Activated CD4-positive, alpha-beta T cell treated with anti-CD3 and anti-CD28 coated beads, Interleukin-2, amount 10 ng/mL, durations not matched to agents 24 days and 14 days (primary cell): ENCODE measurements at regions of chr6 and their contacts with region 1.

Region 1: DNA sequence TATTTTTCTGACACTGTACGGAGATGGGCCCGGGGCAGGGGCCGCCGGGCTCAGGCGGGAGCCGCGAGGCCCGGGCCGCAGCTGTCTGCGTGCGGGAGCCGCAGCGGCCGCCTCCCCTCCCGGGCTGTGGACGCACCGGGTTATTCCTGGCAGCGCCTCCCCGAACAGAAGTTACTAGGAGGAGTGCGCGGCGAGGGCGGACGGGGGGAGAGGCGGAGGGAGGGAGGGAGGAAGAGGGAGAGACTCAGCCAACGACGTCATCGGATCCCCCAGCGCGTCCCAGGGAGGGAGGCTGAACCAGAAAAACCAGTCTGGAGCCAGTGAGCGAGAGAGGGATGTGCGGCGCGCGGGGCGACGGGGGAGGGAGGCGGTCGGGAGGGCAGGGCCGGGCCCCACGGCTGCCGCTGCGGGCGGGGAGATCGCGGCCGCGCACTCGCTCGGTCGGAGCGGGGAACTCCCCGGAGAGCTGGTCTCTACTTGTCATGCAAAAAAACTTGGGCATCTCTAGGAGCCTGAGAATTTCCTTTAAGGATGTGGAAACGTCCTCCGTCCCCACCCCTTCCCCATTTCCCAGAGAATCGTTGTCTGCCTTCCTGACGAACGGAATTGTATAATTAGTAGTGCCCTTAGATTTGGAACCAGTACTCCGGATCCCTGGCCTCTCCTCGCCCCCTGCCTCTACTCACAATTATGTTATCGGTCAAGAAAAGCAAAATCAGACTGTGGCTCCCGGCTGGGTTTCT is 1.4 kb upstream of the HIVEP2 start:
- DNase-seq: peak; percentile 95
- H3K4me3 Mint-ChIP-seq: peak overlapping the region; percentile 93
- H3K27ac Mint-ChIP-seq: peak overlapping the region; percentile 97
- H3K4me1 Mint-ChIP-seq: peaks cover 42% of the 10 kb centered on the region
- H3K27me3 Mint-ChIP-seq: peaks cover 3% of the 10 kb centered on the region

Region 2: GRCh38 chr6:142802124-142802523 is 144.2 kb before region 1 on chr6:
- intact Hi-C with region 1: loop called (anchors 1 kb)
- DNase-seq: no peak
- H3K4me3 Mint-ChIP-seq: peak overlapping the region; percentile 52
- H3K27ac Mint-ChIP-seq: peak overlapping the region; percentile 82
- H3K4me1 Mint-ChIP-seq: peaks cover 54% of the 10 kb centered on the region
- H3K27me3 Mint-ChIP-seq: no peaks in the 10 kb centered on the region

Region 3: DNA sequence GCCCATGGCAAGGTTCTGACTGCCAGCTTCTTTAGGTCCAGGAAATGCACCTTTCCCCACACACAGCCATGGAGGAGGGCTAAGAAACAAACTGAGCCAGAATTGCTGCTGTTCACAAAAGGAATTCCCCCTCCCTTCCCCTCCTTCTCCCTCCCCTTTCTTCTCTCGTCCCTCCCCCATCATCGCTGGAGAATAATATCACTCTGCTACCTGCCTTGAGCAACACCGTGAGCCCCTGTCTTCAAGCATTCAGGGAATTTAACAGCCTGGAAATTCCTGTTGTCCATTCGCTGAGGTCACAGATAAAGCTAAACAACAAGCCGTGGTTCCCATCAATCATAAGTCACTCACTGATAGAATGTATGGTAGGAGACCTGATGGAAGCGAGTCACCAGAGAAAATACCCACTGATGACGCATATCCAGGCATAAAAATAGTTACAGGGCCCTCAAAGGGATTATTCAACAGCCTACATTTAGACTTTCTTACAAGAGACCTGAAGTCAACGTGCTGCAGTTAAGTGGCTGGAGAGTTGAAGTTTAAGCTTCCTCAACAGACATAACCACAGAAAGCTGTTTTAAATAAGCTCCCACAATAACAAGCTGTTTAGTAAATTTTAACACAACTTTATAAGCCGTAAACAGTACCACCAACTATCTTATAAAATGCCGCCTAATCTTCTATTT is 61.0 kb before region 1 on chr6:
- intact Hi-C with region 1: loop called (anchors 1 kb)
- DNase-seq: peak; percentile 86
- H3K4me3 Mint-ChIP-seq: peak overlapping the region; percentile 92
- H3K27ac Mint-ChIP-seq: peak overlapping the region; percentile 99
- H3K4me1 Mint-ChIP-seq: peaks cover 63% of the 10 kb centered on the region
- H3K27me3 Mint-ChIP-seq: no peaks in the 10 kb centered on the region

Region 4: DNA sequence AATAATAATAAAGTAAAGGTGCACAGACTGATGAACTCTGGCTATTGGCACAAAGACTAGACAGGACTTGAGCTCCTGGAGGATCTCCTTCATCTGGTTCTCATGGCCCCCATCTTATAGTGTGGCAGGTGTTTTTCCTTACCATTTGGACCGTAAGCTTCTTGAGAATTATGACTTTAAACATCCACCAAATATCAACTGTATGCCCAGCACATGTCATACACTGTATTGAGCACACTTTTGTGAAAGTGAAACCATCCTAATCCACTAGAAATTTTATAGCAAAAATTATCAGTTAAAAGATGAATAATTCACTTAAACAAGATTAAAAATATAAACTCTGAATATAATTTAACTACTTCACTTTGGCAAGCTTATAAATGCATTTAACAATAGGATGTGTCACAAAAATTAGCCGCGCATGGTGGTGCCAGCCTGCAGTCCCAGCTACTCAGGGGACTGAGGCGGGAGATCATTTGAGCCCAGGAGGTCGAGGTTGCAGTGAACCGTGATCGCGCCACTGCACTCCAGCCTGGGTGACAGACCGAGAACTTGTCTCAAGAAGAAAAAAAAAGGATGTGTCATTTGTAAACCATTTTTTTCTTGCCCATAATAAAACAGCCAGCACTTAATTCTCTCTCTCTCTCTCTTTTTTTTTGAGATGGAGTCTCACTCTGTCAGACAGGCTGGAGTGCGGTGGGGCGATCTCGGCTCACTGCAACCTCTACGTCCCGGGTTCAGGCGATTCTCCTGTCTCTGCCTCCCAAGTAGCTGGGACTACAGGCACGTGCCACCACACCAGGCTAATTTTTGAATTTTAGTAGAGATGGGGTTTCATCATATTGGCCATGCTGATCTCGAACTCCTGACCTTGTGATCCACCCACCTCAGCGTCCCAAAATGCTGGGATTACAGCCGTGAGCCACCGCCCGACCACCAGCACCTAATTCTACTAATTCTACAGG is 10.5 kb before region 1 on chr6:
- intact Hi-C with region 1: loop called (anchors 1 kb)
- DNase-seq: peak; percentile 75
- H3K4me3 Mint-ChIP-seq: peak overlapping the region; percentile 64
- H3K27ac Mint-ChIP-seq: peak overlapping the region; percentile 74
- H3K4me1 Mint-ChIP-seq: peaks cover 65% of the 10 kb centered on the region
- H3K27me3 Mint-ChIP-seq: no peaks in the 10 kb centered on the region

Region 5: DNA sequence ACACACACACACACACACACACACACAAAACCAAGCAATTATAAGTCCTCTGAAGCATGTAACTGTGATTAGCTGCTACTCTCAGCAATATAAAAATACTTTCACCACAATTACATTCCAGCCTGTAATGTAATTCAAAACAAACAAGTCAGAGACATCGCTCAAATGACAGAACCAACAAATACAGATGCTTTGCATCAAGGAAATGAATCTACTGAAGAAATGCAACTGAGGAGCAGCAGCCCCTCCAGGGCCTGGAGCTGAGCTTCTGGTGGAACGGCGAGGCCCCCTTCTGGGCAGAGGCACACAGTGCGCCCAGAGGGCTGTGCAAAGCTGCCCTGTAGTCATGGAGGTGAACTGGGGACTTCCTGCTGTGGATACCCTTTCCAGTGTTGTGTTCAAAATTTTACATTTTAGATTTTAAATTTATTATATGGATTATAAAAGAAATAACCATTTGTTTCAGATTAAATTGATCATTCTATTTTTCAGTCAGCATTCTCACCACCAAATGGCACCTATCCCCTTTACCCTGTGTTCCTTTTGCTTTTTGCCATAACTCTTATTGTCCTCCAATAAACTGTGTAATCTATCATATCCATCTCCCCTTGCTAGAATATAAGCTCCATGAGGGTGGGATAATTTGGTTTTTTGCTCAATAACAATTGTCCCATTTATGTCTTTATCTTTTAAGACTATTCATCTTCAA is 480.9 kb after region 1 on chr6:
- intact Hi-C with region 1: loop called (anchors 5 kb)
- DNase-seq: peak; percentile 92
- H3K4me3 Mint-ChIP-seq: no peak overlapping the region
- H3K27ac Mint-ChIP-seq: no peak overlapping the region
- H3K4me1 Mint-ChIP-seq: peaks cover 9% of the 10 kb centered on the region
- H3K27me3 Mint-ChIP-seq: no peaks in the 10 kb centered on the region

Region 6: DNA sequence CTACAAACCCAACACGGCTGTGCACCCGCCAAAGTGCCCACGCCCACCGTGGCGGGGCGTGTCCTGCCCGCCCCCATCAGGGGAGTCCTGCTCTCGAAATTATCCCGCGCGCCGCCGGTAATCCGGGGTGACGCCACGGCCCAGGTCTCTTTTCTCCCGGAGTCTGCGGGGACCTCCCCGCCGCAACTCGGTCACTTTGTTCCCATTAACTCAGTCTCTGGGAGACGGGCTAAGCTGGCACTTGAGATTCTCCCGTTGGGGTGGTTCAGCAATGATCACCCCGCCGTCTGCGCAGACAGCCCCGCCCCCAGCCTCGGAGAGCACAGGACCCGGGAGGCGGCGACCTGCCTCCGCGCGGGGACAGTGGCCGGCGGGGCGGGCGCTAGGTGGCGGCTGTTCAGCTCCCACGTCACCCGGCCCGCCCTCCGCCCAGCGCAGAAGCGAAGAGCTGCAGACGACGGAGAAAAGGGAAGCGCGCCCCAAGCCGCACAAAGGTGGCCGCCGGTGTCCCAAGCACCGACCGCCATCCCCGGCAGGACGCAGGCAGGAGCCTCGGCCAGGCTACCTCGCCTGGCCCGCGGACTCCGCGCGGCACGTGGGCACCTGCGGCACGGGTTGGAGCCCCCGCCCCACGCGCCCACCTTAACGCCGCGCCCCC is 1117.5 kb after region 1 on chr6:
- intact Hi-C with region 1: loop called (anchors 10 kb)
- DNase-seq: peak; percentile 97
- H3K4me3 Mint-ChIP-seq: peak overlapping the region; percentile 92
- H3K27ac Mint-ChIP-seq: peak overlapping the region; percentile 91
- H3K4me1 Mint-ChIP-seq: peaks cover 41% of the 10 kb centered on the region
- H3K27me3 Mint-ChIP-seq: no peaks in the 10 kb centered on the region